Posterior vena cava (tissue), 2 donors: ENCODE measurements at regions of chr4 and their contacts with region 1.

Region 1: GRCh38 chr4:56630876-56631666 is 50.0 kb downstream of the HOPX start:
- DNase-seq: no peak

Region 2: DNA sequence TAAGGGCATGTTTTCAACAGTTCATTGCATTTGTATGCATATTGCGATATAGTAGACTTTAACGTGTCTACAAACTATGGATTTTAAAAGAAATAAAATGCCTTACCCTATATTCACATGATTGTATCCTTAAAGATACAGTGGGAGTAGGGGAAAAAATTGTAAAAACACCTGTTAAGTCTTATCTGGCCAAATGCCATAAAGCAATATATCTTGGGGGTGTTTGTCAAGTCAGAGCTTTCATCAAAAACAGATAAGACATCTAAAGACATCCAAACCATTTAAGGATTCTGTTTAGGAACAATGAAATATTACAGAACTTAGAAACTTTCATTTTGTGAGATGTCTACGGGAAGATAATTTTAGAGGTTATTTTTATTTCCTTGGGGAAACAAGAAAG is 396.1 kb before region 1 on chr4:
- intact Hi-C with region 1: loop called in 1 of 2 experiments (anchors 5 kb)
- DNase-seq: no peak

Region 3: GRCh38 chr4:56570041-56570440 is 61.0 kb before region 1 on chr4:
- intact Hi-C with region 1: no loop called
- DNase-seq: no peak

Region 4: GRCh38 chr4:56648021-56648823 is 17.2 kb after region 1 on chr4:
- intact Hi-C with region 1: no loop called
- DNase-seq: no peak